Activated CD8-positive, alpha-beta T cell treated with anti-CD3 and anti-CD28 coated beads, Interleukin-2, amount 10 ng/mL, durations not matched to agents 7 days and 5 days (primary cell): ENCODE measurements at regions of chr6 and their contacts with region 1.

Region 1: DNA sequence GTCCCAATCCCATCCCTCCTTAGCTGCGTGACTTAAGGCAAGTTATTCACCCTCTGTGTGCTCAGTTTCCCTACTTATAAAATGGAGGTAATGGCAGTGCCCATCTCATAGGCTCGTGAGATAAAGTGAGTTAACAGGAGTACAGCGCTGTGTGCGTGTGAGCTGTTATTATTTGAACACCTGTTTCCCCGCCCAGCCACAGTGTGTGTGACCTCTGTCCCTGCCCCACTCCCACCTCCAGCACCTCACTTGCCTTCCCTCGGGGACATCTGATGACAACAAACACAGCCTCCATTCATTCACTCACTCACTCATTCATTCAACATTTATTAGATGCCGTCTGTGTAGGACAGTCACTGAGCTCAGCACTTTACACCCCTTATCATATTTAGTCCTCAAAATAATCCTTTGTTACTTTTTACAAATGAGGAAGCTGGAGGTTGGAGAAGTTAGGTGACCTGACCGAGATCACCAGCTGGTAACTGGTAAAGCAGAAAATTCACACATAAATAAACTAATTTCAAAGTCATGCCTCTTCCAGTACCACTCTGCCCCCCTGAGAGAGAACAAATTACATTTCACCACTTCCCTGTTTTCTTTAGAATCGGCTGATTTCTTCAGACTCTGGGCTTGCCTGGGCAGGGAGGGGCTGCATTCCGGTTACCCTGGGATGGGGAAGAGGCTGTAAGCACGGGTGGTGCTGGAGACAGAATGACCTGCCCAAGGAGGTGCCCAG is 58.6 kb downstream of the CPNE5 start:
- DNase-seq: no peak
- ATAC-seq: no peak
- H3K4me3 Mint-ChIP-seq: no peak overlapping the region
- H3K27ac Mint-ChIP-seq: peak overlapping the region; percentile 57
- H3K4me1 Mint-ChIP-seq: peaks cover 38% of the 10 kb centered on the region
- H3K27me3 Mint-ChIP-seq: peaks cover 11% of the 10 kb centered on the region

Region 2: GRCh38 chr6:36615018-36615761 is 165.4 kb before region 1 on chr6:
- CTCF ChIA-PET with region 1: interaction called, 32 read pairs
- POLR2A ChIA-PET with region 1: no interaction called
- DNase-seq: peak; percentile 57
- ATAC-seq: peak; percentile 38
- H3K4me3 Mint-ChIP-seq: no peak overlapping the region
- H3K27ac Mint-ChIP-seq: no peak overlapping the region
- H3K4me1 Mint-ChIP-seq: peaks cover 8% of the 10 kb centered on the region
- H3K27me3 Mint-ChIP-seq: no peaks in the 10 kb centered on the region

Region 3: GRCh38 chr6:36752886-36753506 is 27.6 kb before region 1 on chr6:
- CTCF ChIA-PET with region 1: interaction called, 78 read pairs
- POLR2A ChIA-PET with region 1: no interaction called
- DNase-seq: no peak
- ATAC-seq: no peak
- H3K4me3 Mint-ChIP-seq: no peak overlapping the region
- H3K27ac Mint-ChIP-seq: peak overlapping the region; percentile 83
- H3K4me1 Mint-ChIP-seq: peaks cover 61% of the 10 kb centered on the region
- H3K27me3 Mint-ChIP-seq: no peaks in the 10 kb centered on the region

Region 4: GRCh38 chr6:36793913-36794712 is 13.5 kb after region 1 on chr6:
- CTCF ChIA-PET with region 1: interaction called, 26 read pairs
- POLR2A ChIA-PET with region 1: no interaction called
- DNase-seq: no peak
- ATAC-seq: no peak
- H3K4me3 Mint-ChIP-seq: no peak overlapping the region
- H3K27ac Mint-ChIP-seq: no peak overlapping the region
- H3K4me1 Mint-ChIP-seq: peaks cover 4% of the 10 kb centered on the region
- H3K27me3 Mint-ChIP-seq: peaks cover 17% of the 10 kb centered on the region

Region 5: GRCh38 chr6:36809941-36810803 is 29.6 kb after region 1 on chr6:
- CTCF ChIA-PET with region 1: interaction called, 11 read pairs
- POLR2A ChIA-PET with region 1: no interaction called
- DNase-seq: no peak
- ATAC-seq: no peak
- H3K4me3 Mint-ChIP-seq: no peak overlapping the region
- H3K27ac Mint-ChIP-seq: no peak overlapping the region
- H3K4me1 Mint-ChIP-seq: no peaks in the 10 kb centered on the region
- H3K27me3 Mint-ChIP-seq: peaks cover 18% of the 10 kb centered on the region

Region 6: DNA sequence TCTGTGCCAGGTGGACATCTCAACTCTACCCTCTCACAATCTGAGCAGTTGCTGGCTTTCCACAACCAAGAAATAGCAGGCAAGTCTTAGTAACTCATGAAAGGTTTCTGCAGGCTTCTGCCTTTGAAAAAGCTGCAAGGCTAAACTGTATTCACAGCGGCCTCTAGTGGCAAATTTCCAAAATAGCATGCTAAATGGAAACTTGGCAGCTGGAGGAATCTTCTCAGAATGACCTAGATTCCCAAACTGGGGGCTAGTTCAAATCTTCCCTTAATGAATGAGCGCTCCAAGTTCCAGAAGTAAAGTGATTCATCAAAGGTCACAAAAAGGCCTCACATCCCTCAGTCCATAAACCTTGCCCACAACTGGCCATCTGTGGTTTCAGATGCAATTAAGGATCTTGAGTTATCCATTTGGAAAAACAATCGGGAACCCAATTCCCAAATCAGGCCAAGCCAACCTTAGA is 70.6 kb after region 1 on chr6:
- CTCF ChIA-PET with region 1: interaction called, 69 read pairs
- POLR2A ChIA-PET with region 1: no interaction called
- DNase-seq: peak; percentile 68
- ATAC-seq: no peak
- H3K4me3 Mint-ChIP-seq: no peak overlapping the region
- H3K27ac Mint-ChIP-seq: no peak overlapping the region
- H3K4me1 Mint-ChIP-seq: peaks cover 5% of the 10 kb centered on the region
- H3K27me3 Mint-ChIP-seq: no peaks in the 10 kb centered on the region

Region 7: GRCh38 chr6:36874443-36875249 is 94.0 kb after region 1 on chr6 and contains the start of gene PPIL1:
- CTCF ChIA-PET with region 1: interaction called, 25 read pairs
- POLR2A ChIA-PET with region 1: interaction called, 4 read pairs
- DNase-seq: peak; percentile 89
- ATAC-seq: peak; percentile 94
- H3K4me3 Mint-ChIP-seq: peak within 1 kb of the TSS; percentile 83
- H3K27ac Mint-ChIP-seq: peak within 1 kb of the TSS; percentile 98
- H3K4me1 Mint-ChIP-seq: peaks cover 47% of the 10 kb centered on the region
- H3K27me3 Mint-ChIP-seq: peaks cover 8% of the 10 kb centered on the region
- total RNA-seq, gene PPIL1: 32.6 to 33.5 TPM